ENCODE measurements at regions of chr14 and their contacts with region 1.

Region 1: DNA sequence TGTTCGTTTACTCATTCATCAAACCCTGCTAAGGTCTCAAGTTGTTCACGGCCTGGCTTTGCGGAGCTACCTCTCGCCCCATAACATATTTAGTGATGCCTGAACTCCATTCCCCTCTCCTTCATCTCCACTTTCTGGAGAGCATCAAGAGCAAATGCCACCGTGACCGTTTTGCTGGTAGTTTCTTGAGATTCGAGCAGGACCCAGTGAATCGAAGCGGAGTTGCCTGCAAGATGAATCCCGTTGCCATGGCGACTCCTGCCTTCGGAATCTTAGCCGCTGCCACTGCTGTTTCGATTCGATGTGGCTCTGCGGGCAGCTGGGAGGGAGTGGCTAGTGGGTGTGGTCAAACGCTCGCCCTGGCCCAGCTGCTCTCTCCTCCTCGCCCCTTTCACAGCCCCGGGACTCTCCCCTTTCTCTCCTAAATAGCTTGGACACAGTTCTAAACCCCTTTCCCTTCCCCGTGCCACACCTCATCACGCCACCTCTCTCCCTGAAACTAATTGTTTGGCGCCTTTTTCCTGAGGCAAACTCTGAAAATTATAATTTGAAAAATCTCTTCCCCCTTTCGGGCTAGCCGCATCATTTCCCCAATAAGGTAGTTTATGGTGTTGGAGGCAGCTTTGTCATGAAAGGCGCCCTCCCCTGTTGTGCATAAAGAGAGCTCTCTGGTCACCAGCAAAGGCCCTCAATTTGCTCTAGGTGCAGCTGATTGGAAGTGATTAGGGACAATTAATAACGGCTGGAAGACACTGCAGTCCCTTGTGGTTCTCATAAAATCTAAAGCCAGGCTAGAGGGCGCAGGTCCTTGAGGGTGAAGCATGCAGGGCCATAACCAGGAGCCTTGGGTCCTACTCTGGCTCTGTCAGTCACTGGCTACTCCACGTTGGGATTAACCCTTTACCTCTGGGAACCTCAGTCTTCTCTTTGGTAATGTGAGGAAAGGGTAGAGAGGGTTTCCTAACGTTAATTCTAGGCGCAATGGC is 1.6 kb downstream of the DAAM1 start:
- DNase-seq: peak; percentile 90 to 94 (median 90)
- ATAC-seq: peak; percentile 41 to 42
- H3K4me3 ChIP-seq: peak overlapping the region; percentile 80
- H3K27ac ChIP-seq: peak overlapping the region; percentile 93
- H3K4me1 ChIP-seq: peaks cover 4% of the 10 kb centered on the region
- H3K27me3 ChIP-seq: no peaks in the 10 kb centered on the region

Region 2: DNA sequence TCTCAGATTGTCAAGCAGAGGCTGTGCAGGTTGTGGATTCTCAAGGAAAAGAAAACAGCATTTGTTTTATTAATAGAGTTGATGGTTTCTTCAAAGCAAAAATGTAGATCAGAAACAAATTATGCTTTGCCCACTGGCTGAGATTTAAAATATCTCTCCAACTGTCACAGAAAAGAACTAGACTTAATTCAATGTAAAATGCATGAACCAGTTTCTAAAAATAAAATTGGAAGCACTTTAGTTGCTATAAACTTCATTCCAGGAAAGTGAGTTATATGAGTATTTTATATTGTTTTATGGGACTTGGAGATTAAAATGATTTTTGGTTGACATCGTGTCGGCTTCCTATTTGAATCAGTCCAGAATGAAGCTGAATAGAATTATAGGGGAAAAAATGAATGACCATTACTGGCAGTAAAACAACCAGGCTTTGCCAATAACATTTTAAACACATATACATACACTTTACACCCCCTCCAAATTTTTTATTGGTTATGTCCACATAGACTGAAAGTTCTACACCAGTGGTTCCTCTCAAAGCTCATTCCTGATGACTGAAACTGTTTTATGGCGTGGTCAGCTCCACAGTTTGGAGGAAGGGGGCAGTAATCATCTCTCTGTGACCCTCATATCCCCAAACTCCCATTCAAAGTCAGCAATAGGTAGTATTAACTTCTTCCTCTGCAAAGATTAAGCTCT is 57.1 kb before region 1 on chr14:
- intact Hi-C with region 1: loop called in 2 of 4 experiments (anchors 10 kb)
- DNase-seq: no peak
- ATAC-seq: no peak
- H3K4me3 ChIP-seq: no peak overlapping the region
- H3K27ac ChIP-seq: peak overlapping the region; percentile 66
- H3K4me1 ChIP-seq: no peaks in the 10 kb centered on the region
- H3K27me3 ChIP-seq: no peaks in the 10 kb centered on the region

Region 3: DNA sequence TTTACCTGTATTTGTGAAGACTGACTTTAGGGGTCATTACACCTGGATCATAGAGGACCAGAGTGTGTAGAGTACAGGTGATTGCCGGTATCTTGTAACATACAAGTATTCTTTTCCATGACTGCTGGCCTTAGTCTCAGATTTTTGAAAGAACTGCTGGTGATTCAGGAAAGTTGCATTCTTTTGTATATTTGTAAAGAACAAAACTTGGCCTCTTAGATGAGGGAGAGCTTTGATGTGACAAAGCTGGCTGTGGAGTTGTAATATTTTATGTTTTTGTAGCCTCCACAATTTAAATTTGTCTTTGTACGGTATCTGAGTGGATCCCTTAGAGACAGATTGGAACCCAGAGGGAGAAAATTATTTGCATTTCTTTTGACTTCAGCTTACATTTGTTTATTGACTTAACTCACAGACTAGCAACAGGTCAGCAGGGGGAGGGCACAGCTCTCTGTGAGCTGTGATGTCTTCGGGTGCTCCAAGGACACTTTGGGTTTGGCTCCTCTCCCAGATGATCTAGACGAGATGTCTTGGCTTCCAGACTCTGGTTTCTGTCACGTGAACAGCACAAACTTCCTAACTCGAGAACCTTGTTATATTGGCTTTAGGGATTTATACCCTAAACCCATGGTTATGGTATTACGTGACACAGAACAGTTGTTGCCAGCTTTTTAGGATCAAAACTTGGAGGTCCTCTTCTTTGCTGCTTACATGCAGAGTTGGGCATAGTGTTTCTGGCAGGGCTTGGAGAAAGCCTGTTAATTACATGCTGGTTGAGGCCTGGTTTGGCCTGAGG is 64.3 kb after region 1 on chr14:
- intact Hi-C with region 1: loop called in 1 of 4 experiments (anchors 5 kb)
- DNase-seq: peak; percentile 68 to 87 (median 78)
- ATAC-seq: peak; percentile 85 to 89
- H3K4me3 ChIP-seq: no peak overlapping the region
- H3K27ac ChIP-seq: peak overlapping the region; percentile 99
- H3K4me1 ChIP-seq: peaks cover 23% of the 10 kb centered on the region
- H3K27me3 ChIP-seq: no peaks in the 10 kb centered on the region

Region 4: DNA sequence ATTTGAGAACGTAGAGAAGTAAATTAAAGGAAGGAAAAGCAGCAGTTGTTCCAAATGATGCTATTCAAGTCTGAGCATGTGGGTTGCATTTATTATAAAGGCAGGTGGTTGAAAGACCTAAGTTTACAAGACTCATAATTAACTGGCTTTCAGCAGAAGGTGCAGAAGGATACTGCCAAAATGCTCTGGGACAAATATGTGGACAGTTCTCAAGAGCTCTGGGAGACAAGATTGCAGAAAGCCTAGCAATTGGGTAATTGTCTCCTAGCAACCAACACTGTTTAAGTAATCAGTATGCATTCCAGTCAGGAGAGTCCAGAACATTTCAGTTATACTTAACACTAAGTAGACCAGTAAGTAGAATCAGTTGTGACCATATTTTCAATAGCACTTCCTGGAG is 143.6 kb after region 1 on chr14:
- intact Hi-C with region 1: loop called in 1 of 4 experiments (anchors 10 kb)
- DNase-seq: no peak
- ATAC-seq: peak; percentile 88 to 92
- H3K4me3 ChIP-seq: no peak overlapping the region
- H3K27ac ChIP-seq: peak overlapping the region; percentile 99
- H3K4me1 ChIP-seq: peaks cover 17% of the 10 kb centered on the region
- H3K27me3 ChIP-seq: no peaks in the 10 kb centered on the region

Region 5: GRCh38 chr14:59428581-59429012 is 238.5 kb after region 1 on chr14:
- intact Hi-C with region 1: loop called in 2 of 4 experiments (anchors 10 kb)
- DNase-seq: no peak
- ATAC-seq: peak in 1 of 2 donors; percentile 8
- H3K4me3 ChIP-seq: no peak overlapping the region
- H3K27ac ChIP-seq: peak overlapping the region; percentile 95
- H3K4me1 ChIP-seq: peaks cover 18% of the 10 kb centered on the region
- H3K27me3 ChIP-seq: no peaks in the 10 kb centered on the region